PC-3 (cell line): ENCODE measurements at regions of chr20 and their contacts with region 1.

Region 1: GRCh38 chr20:63739130-63740069 is at the start of gene SLC2A4RG:
- DNase-seq: peak; percentile 85
- ATAC-seq: peak; percentile 60
- H3K4me3 ChIP-seq: peak within 1 kb of the TSS; percentile 84
- H3K27ac ChIP-seq: peak within 1 kb of the TSS; percentile 64
- H3K4me1 ChIP-seq: peaks cover 12% of the 10 kb centered on the region
- H3K27me3 ChIP-seq: no peaks in the 10 kb centered on the region
- CTCF ChIP-seq: no peak
- total RNA-seq, gene SLC2A4RG: 116 TPM in 2 replicates

Region 2: DNA sequence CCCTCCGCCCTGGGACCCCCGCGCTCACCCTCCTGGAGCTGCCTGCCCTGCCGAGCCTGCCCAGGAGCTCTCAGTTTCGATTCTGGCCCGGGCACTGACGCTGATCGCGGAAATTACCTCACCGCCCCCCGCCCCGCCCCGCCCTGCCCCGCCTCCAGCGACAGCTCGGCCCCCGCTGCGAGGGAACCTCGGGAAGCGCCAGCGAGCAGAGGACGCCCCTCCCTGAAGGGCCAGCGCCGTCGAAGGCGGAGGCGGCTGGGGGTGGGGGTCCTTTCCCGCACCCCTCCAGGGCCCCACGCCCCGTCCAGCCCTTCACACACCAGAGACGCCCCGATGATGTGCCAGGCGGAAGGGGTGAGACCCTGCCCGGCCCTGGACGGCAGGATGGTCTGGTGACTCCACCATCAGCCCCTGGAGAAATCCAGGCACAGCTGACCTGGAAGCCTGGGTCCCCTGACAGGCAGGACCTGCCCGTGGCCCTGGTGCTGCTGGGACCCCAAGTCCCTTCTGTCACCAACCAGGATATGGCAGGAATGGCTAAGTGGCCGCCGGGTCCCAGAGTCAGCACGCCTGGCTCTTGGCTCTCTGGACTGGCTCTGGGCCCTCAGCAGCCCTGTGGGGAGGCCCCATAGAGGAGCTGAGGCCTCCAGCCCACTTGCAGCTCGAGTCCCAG is 165.1 kb before region 1 on chr20 and contains the start of gene HELZ2:
- CTCF ChIA-PET with region 1: no interaction called
- POLR2A ChIA-PET with region 1: interaction called, 10 read pairs
- intact Hi-C with region 1: no loop called
- DNase-seq: peak; percentile 58
- ATAC-seq: peak; percentile 85
- H3K4me3 ChIP-seq: peak within 1 kb of the TSS; percentile 77
- H3K27ac ChIP-seq: no peak within 1 kb of the TSS
- H3K4me1 ChIP-seq: peaks cover 18% of the 10 kb centered on the region
- H3K27me3 ChIP-seq: no peaks in the 10 kb centered on the region
- CTCF ChIP-seq: no peak
- total RNA-seq, gene HELZ2: 33.4 and 77.2 TPM in 2 replicates

Region 3: DNA sequence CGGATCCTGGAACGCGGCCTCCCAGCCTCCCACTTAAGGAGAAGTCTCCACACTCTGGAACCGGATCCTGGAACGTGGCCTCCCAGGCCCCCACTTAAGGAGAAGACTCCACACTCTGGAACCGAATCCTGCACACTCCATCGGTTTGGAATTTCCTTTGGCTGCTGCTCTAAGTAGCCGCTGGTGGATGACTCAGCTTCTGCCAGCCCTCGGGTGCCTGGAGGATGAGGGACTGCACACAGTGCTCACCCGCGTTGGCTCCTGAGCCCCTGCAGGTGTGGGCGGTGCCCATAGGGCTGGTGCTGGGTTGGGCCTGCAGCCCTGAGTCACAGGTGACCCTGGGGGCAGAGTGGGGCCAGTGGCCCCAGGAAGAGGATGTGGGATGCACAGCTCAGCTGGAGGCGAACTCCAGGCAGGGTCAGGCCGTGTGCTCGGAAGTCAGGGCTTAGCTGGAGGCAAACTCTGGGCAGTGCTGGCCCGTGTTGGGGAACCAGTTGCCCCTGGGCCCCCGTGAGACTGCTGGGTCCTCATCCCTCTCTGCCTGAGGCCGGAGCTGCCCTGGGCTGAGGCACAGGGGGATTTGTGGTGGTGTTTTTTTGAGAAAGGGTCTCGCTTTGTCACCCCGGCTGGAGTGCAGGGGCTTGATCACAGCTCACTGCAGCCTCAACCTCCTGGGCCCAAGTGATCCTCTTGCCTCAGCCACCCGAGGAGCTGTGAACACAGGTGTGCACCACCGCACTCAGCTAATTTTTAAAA is 56.8 kb before region 1 on chr20:
- CTCF ChIA-PET with region 1: no interaction called
- POLR2A ChIA-PET with region 1: no interaction called
- intact Hi-C with region 1: no loop called
- DNase-seq: peak; percentile 100
- ATAC-seq: peak; percentile 93
- H3K4me3 ChIP-seq: no peak overlapping the region
- H3K27ac ChIP-seq: peak overlapping the region; percentile 84
- H3K4me1 ChIP-seq: peaks cover 34% of the 10 kb centered on the region
- H3K27me3 ChIP-seq: no peaks in the 10 kb centered on the region
- CTCF ChIP-seq: no peak

Region 4: GRCh38 chr20:63707549-63708300 is 31.7 kb before region 1 on chr20 and contains the starts of genes ARFRP1 and ZGPAT:
- CTCF ChIA-PET with region 1: interaction called, 3 read pairs
- POLR2A ChIA-PET with region 1: interaction called, 5 read pairs
- intact Hi-C with region 1: loop called (anchors 2 kb)
- DNase-seq: peak; percentile 78
- ATAC-seq: peak; percentile 83
- H3K4me3 ChIP-seq: peak within 1 kb of the TSS; percentile 91
- H3K27ac ChIP-seq: peak within 1 kb of the TSS; percentile 47
- H3K4me1 ChIP-seq: peaks cover 18% of the 10 kb centered on the region
- H3K27me3 ChIP-seq: no peaks in the 10 kb centered on the region
- CTCF ChIP-seq: no peak
- total RNA-seq, gene ARFRP1: 71.2 and 73.5 TPM in 2 replicates
- total RNA-seq, gene ZGPAT: 37.9 and 56.8 TPM in 2 replicates

Region 5: DNA sequence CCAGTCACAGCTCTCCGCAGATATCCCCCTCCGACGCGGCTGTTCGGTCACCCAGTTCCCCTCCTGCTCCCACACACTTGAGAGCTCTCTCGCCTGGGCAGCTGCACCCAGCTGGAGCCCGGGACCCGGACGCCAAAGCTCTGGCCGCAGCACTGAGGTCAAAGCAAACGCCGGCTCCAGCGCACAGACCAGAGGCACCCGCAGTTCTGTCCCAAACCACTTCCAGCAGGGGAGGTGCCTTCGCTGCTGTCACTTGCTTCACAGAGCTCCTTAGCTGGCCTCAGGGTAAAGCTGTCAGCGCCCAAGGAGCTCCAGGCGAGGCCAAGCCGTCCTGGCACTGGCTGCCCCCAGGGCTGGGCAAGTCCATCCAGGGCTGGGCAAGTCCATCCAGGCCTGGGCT is 28.1 kb after region 1 on chr20:
- CTCF ChIA-PET with region 1: interaction called, 3 read pairs
- POLR2A ChIA-PET with region 1: interaction called, 10 read pairs
- intact Hi-C with region 1: no loop called
- DNase-seq: no peak
- ATAC-seq: no peak
- H3K4me3 ChIP-seq: no peak overlapping the region
- H3K27ac ChIP-seq: no peak overlapping the region
- H3K4me1 ChIP-seq: 0 out of 2 replicates have a peak, but pooled peaks cover under 1% of the 10 kb centered on the region
- H3K27me3 ChIP-seq: no peaks in the 10 kb centered on the region
- CTCF ChIP-seq: no peak

Region 6: DNA sequence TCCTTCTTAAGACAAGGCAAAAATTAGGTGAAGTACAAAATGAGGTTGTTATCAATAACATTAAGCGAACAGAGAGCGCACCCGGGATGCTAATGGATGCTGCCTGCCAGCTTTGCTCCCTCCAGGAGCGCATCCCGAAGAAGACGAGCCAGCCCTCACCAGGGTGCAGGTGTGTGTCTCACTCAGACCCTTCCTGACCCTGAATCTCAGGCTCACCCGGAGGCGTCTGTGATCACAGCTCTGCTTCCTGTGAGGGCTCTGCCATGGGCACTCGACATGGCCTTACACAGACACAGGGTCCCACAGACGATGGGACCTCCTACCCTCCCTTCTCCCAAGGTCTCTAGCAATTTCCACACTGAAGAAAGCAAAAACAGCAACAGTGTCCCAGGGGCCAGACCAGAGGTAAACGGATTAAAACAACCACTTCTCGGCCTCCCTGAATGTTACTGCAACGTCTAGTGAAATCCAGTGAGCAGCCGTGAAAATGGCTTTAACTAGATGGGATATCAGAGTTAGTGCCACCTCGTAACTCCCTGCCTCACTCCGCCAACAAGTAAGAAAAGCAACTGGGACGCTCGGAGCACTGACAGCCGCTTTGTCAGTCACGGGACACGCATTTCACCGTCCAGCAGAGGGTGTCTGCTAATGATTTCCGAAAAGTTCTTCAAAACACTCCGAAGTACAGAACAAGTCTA is 80.0 kb after region 1 on chr20:
- CTCF ChIA-PET with region 1: no interaction called
- POLR2A ChIA-PET with region 1: no interaction called
- intact Hi-C with region 1: no loop called
- DNase-seq: peak; percentile 54
- ATAC-seq: peak; percentile 93
- H3K4me3 ChIP-seq: peak overlapping the region; percentile 58
- H3K27ac ChIP-seq: no peak overlapping the region
- H3K4me1 ChIP-seq: peaks cover 5% of the 10 kb centered on the region; the same call in 1 of the 2 replicates
- H3K27me3 ChIP-seq: no peaks in the 10 kb centered on the region
- CTCF ChIP-seq: peak; percentile 66

Region 7: DNA sequence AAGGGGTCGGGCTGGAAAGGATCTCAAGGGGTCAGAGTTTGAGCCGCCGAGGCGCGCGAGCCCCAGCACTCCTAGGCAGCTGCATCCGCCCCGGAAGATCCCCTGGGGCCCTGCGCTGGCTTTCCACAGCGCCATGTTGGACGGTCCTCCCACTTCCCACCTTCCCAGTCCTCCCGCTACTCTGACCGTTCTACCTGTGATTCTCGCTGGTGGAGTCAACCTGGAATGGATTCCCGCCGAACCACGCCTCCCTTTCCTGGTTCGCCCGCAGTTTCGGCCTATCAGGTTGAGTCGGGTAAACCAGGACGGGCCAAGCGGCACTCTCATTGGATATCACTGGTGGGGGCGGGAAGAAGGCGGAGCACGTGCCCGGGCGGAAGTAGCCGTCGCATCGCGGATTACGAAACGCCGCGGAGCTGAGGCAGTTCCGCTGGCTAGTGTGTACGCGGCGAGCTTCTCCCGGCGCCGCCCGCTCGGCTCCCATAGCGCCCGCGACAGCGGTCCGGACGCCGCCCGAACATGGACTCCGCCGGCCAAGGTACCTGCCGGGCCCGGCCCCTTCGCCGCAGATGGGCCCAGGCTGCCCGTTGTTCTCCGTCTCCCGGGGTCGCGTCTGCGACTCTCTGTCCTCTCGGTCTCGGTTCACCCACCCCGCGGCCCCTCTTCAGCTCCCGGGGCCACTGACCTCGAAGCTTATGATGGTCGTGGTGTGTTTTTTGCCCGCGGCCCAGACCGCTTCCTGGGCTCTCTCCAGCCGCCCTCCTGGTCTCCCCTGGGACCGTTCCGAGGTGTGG is 125.6 kb after region 1 on chr20 and contains the start of gene TPD52L2:
- CTCF ChIA-PET with region 1: no interaction called
- POLR2A ChIA-PET with region 1: no interaction called
- intact Hi-C with region 1: no loop called
- DNase-seq: peak; percentile 99
- ATAC-seq: peak; percentile 86
- H3K4me3 ChIP-seq: peak within 1 kb of the TSS; percentile 90
- H3K27ac ChIP-seq: peak within 1 kb of the TSS; percentile 77
- H3K4me1 ChIP-seq: peaks cover 10% of the 10 kb centered on the region
- H3K27me3 ChIP-seq: no peaks in the 10 kb centered on the region
- CTCF ChIP-seq: no peak
- total RNA-seq, gene TPD52L2: 147 and 167 TPM in 2 replicates

Region 8: GRCh38 chr20:64033981-64034493 is 294.6 kb after region 1 on chr20:
- CTCF ChIA-PET with region 1: no interaction called
- POLR2A ChIA-PET with region 1: no interaction called
- intact Hi-C with region 1: no loop called
- DNase-seq: no peak
- ATAC-seq: no peak
- H3K4me3 ChIP-seq: no peak overlapping the region
- H3K27ac ChIP-seq: no peak overlapping the region
- H3K4me1 ChIP-seq: no peaks in the 10 kb centered on the region
- H3K27me3 ChIP-seq: no peaks in the 10 kb centered on the region
- CTCF ChIP-seq: no peak